Gastrocnemius medialis (tissue), 4 donors: ENCODE measurements at regions of chr11 and their contacts with region 1.

Region 1: DNA sequence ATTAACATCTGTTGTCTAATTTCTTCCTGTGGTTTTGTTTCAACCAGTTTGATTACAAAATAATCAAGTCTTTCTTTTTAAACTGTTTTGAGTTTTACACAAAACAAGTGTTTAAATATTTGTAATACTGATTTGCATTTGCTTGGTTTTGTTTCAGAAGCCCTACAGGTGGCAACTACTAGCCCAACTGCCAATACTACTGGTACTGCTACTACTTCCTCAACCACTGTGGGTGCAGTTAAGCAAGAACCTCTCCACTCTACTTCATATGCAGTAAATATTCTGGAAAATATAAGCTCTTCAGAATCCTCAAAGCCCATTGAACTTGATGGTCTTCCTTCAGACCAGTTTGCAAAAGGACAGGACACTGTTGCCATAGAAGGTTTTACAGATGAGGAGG is 61.1 kb downstream of the QSER1 start:
- DNase-seq: no peak
- ATAC-seq: no peak
- H3K4me3 ChIP-seq: no peak overlapping the region
- H3K27ac ChIP-seq: no peak overlapping the region
- H3K4me1 ChIP-seq: no peaks in the 10 kb centered on the region
- H3K27me3 ChIP-seq: no peaks in the 10 kb centered on the region
- CTCF ChIP-seq: no peak
- POLR2A ChIP-seq: no peak

Region 2: GRCh38 chr11:32968541-32968940 is 14.8 kb after region 1 on chr11:
- in situ Hi-C with region 1: no loop called
- intact Hi-C with region 1: no loop called
- DNase-seq: no peak
- ATAC-seq: no peak
- H3K4me3 ChIP-seq: no peak overlapping the region
- H3K27ac ChIP-seq: no peak overlapping the region
- H3K4me1 ChIP-seq: no peaks in the 10 kb centered on the region
- H3K27me3 ChIP-seq: no peaks in the 10 kb centered on the region
- CTCF ChIP-seq: no peak
- POLR2A ChIP-seq: no peak

Region 3: GRCh38 chr11:33065445-33066178 is 111.9 kb after region 1 on chr11:
- in situ Hi-C with region 1: loop called (anchors 5 to 10 kb)
- intact Hi-C with region 1: no loop called
- DNase-seq: peak; percentile 7 to 39
- ATAC-seq: peak; percentile 62 to 71
- H3K4me3 ChIP-seq: no peak overlapping the region
- H3K27ac ChIP-seq: no peak overlapping the region
- H3K4me1 ChIP-seq: peaks cover 0 to 6% of the 10 kb centered on the region in 2 donors
- H3K27me3 ChIP-seq: no peaks in the 10 kb centered on the region
- CTCF ChIP-seq: peak; percentile 62 to 86 (median 83)
- POLR2A ChIP-seq: no peak